ENCODE measurements at regions of chr2 and their contacts with region 1.

Region 1: DNA sequence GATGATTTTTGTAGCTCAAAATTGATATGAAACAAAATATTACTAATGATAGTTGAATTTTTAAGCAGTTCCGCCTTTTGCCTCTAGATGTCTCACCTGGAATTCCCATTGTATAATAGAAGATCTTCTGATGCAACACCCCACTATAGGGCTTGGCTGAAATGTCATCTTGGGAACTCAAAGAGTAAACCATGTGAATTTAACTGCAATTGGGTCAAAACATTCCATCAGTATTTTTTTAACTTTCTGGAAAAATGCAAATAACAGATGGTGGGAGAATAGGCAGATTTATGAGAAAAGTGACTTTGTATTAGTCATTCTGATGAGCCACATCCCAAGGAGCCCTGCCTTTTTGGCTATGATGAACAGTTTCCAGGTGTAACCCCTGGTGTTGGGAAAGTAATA is 489.9 kb downstream of the NYAP2 start:
- DNase-seq: peak; percentile 68
- H3K27ac ChIP-seq: no peak overlapping the region
- CTCF ChIP-seq: peak; percentile 84

Region 2: DNA sequence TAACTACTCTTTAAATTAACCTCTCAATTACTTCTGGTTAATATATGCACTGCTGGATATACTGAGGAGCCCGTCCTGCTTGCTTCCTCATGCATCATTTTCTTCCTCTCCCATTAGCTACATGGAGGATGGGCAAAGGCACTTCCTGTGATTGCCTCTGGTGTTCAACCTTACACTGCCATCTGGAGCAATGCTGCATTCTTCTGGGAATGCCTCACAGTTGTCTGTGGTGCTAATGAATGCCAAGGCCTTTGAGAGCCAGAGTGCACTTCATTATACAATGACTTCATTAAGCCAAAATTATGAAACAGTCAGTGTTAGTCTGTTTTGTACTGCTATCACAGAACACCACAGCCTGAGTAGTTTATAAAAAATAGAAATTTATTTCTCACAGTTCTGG is 712.4 kb before region 1 on chr2:
- CTCF ChIA-PET with region 1: no interaction called
- POLR2A ChIA-PET with region 1: no interaction called
- DNase-seq: no peak
- H3K27ac ChIP-seq: no peak overlapping the region
- CTCF ChIP-seq: no peak

Region 3: DNA sequence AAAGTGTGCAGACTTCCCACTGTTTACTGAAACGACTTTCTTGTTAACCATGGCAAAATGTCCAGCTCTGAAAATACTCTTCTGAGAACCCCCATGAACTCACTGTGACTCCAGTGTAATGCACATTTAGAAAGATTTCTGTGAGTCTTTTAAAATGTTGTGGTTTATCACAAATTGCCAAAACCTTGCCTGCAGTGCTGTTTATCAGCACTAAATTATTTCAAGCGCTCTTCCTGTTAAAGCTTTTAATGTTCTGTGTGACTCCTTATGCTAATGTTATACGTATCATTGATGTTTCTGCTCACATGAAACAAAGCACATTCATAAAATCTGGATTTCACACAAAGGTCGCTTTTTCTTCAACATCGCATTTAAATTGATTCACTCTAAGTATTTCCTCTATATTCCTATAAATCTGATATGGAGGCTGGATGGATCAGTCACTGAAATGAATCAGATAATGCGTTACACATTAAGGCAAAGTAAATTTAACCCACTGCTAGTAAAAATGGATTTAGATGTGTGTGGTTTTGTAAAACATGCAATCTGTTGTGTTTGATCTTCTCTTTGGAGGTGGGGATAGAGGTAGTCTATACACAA is 31.3 kb after region 1 on chr2:
- CTCF ChIA-PET with region 1: no interaction called
- POLR2A ChIA-PET with region 1: no interaction called
- DNase-seq: no peak
- H3K27ac ChIP-seq: no peak overlapping the region
- CTCF ChIP-seq: no peak

Region 4: DNA sequence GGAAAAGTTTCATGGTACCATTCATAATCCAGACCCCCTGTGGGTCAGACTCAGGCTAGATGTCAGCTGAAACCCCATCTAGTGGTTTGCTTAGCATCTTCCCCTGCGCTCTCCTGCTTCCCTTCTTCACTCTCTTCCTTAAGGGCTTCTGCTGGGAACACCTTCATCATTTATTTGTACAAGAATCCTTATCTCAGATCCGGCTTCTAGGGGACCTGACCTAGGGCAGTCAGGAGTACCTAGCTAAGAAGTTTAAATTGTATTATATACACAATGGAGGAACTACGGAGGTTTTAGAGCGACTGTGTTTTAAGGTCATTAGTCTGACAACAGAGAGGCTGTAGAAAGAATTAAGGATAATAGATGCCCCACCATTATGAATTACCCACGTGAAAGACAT is 398.5 kb after region 1 on chr2:
- CTCF ChIA-PET with region 1: interaction called, 12 read pairs
- POLR2A ChIA-PET with region 1: no interaction called
- DNase-seq: no peak
- H3K27ac ChIP-seq: no peak overlapping the region
- CTCF ChIP-seq: no peak